Mucosa of descending colon (tissue), 3 donors: ENCODE measurements at regions of chr1 and their contacts with region 1.

Region 1: DNA sequence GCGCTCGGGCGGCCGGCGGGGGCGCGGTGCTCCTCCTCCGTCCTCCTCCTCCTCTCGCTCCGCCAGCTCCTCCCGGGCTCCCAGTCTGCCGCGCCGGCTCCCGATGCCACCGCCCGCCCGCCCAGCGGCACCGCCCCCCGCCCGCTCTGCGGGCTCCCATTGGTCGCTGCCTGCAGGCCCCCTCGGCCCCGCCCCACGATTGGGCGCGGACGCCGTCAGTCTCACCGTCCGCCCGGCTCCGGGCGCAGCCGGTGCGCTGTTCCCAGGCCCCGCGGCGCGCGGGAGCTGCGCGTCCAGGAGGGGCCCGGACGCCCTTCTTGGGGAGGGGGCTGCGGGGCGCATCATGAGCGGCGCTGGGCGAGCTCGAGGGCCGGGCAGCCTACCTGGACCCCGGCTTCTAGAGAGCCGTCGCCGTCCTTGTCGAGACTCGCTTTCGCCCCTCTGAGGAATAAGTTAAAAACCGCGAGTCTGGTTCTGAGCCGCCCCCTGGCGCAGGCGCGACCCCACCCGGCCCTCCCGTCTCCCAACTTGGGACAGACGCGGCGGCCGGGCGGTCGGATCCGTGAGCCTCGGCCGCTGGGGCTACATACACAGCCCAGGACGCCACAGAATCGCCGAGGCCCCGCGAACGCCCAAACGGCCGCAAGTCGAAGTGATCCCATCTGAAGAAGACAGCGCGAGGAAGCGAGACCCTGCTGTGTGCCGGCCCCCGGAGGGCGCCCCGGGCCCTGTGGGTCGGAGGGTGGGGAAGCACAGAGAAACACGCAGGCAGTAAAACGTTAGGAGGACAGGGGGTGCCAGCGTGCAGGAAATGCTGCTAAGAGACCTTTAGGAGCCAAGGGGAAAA is at the start of gene SIPA1L2:
- DNase-seq: peak; percentile 94 to 98 (median 95)
- ATAC-seq: peak; percentile 92
- H3K4me3 ChIP-seq: peak within 1 kb of the TSS; percentile 73
- H3K4me1 ChIP-seq: peaks cover 32% of the 10 kb centered on the region
- CTCF ChIP-seq: no peak
- total RNA-seq, gene SIPA1L2: 78.7 to 94.4 (median 79.0) TPM

Region 2: GRCh38 chr1:231866392-231867331 is 763.6 kb before region 1 on chr1:
- intact Hi-C with region 1: loop called (anchors 10 kb)
- DNase-seq: peak in 2 of 3 donors; percentile 42 to 58
- ATAC-seq: peak; percentile 65
- H3K4me3 ChIP-seq: no peak overlapping the region
- H3K4me1 ChIP-seq: no peaks in the 10 kb centered on the region
- CTCF ChIP-seq: peak; percentile 40

Region 3: GRCh38 chr1:232793944-232794343 is 163.7 kb after region 1 on chr1:
- intact Hi-C with region 1: loop called in 1 of 2 experiments (anchors 10 kb)
- DNase-seq: peak in 1 of 3 donors; percentile 46
- ATAC-seq: peak; percentile 90
- H3K4me3 ChIP-seq: no peak overlapping the region
- H3K4me1 ChIP-seq: peaks cover 15% of the 10 kb centered on the region
- CTCF ChIP-seq: no peak

Region 4: DNA sequence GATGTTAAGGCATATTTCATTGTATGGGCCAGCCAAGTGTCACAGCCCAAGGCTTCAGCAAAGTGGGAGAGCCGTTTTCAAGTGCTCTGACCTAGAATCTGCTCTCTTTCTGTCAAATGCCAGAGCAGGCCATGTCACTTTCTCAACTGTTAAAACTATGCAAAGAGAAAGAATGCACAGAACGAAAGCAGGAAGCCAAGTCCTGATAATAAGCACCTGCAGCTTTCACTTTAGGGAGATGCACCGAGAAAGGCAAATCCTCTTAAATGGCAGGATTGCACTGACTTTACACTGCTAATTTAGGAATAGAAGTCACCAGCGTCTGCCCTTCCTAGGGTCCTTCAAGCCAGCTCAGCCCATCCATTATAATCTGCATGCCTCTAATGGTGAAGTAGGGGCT is 271.0 kb after region 1 on chr1:
- intact Hi-C with region 1: no loop called
- DNase-seq: peak in 1 of 3 donors; percentile 20
- ATAC-seq: peak; percentile 44
- H3K4me3 ChIP-seq: no peak overlapping the region
- H3K4me1 ChIP-seq: peaks cover 20% of the 10 kb centered on the region
- CTCF ChIP-seq: no peak

Region 5: GRCh38 chr1:233025157-233025915 is 395.1 kb after region 1 on chr1:
- intact Hi-C with region 1: loop called in 1 of 2 experiments (anchors 5 kb)
- DNase-seq: peak; percentile 67 to 83 (median 78)
- ATAC-seq: peak; percentile 95
- H3K4me3 ChIP-seq: no peak overlapping the region
- H3K4me1 ChIP-seq: no peaks in the 10 kb centered on the region
- CTCF ChIP-seq: peak; percentile 22

Region 6: DNA sequence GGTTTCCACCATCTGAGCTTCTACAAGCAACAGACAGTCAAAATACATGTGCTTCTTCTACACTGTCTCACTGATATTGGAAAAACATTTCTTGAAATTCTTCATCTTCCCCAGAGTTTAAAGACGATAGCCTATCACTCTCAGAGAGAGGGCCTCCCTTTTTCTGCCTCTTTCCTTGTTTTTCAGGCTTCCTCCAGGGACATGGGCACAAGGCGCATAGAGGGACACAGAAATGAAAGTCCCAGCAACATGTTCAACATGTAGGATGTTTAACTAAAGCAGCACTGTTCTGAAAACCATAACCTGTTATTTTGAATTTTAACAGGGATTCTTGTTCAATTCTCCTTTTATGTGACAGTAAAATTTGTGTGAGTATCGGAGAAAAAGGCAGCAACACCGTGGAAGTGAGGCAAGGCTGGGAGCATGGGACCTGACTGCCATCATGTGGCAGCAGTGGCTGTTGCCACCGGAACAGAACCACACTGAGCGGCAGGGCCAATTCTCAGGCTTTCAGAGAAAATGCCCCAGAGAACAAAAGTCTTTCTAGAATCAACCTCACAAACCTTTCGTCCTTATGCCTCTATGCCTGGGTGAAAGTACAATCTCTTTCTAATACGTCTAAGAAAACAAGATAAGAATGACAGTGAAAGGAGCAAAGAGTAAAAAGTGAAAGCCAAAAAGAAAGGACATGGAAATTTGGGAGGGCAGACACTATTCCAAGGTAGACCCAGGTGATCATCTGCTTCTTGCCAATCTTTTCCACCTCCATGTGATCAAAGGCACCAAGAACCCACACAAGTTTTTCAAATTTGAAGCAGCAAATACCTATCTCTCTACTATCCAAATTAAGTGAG is 610.8 kb after region 1 on chr1:
- intact Hi-C with region 1: loop called in 1 of 2 experiments (anchors 10 kb)
- DNase-seq: peak; percentile 75 to 80 (median 79)
- ATAC-seq: peak; percentile 78
- H3K4me3 ChIP-seq: no peak overlapping the region
- H3K4me1 ChIP-seq: peaks cover 26% of the 10 kb centered on the region
- CTCF ChIP-seq: peak; percentile 61